Right cardiac atrium (tissue), 5 donors: ENCODE measurements at regions of chr13 and their contacts with region 1.

Region 1: GRCh38 chr13:19959831-19960652 is 1.5 kb downstream of the ZMYM2 start:
- DNase-seq: peak; percentile 84 to 92 (median 90)
- ATAC-seq: peak; percentile 49 to 59
- H3K4me3 ChIP-seq: peak overlapping the region; percentile 95
- H3K27ac ChIP-seq: peak overlapping the region; percentile 99
- H3K4me1 ChIP-seq: no peaks in the 10 kb centered on the region
- H3K27me3 ChIP-seq: no peaks in the 10 kb centered on the region

Region 2: GRCh38 chr13:19794635-19795423 is 165.2 kb before region 1 on chr13:
- intact Hi-C with region 1: no loop called
- DNase-seq: no peak
- ATAC-seq: no peak
- H3K4me3 ChIP-seq: no peak overlapping the region
- H3K27ac ChIP-seq: no peak overlapping the region
- H3K4me1 ChIP-seq: no peaks in the 10 kb centered on the region
- H3K27me3 ChIP-seq: no peaks in the 10 kb centered on the region

Region 3: DNA sequence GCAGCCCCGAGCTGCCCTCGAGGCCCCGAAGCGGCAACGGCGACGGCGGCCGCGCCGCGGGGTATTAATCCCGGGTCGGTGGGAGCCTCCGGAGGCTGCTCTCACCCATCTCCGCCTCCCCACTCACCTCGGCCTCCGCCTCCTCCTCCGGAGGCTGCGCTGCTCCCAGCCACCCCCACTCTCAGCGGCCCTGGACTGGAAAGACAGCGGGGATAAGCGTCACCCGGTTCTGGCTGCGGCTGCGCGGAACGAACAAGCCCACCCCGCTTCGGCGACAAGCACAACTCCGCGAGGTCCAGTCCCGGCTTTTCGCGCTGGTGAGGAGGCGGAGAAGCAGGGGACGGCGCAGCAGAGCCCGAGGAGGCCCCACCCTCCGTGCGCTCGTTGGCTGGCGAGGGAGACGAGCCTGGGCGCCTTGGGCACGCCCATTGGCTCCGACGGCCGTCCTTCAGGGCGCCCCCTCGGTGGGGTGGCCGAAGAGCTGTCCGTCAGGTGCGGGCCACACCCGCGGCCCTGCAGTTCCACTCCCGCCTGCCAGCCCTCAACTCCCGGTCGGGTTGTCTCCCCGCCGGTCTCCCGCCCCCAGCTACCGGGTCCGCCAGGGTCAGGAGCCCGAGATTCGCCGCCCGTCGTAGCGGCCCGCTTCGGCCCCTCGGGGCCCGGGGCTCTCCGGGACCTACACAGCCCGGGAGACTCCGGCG is 96.6 kb before region 1 on chr13 and contains the start of gene ZMYM5:
- intact Hi-C with region 1: loop called in 1 of 4 experiments (anchors 5 kb)
- DNase-seq: peak; percentile 99 to 100 (median 100)
- ATAC-seq: peak; percentile 98
- H3K4me3 ChIP-seq: peak within 1 kb of the TSS; percentile 93
- H3K27ac ChIP-seq: peak within 1 kb of the TSS; percentile 97
- H3K4me1 ChIP-seq: peaks cover 2% of the 10 kb centered on the region
- H3K27me3 ChIP-seq: no peaks in the 10 kb centered on the region
- total RNA-seq, gene ZMYM5: 7.7 to 12.7 (median 8.5) TPM